Tibial artery (tissue), 4 donors: ENCODE measurements at regions of chr1 and their contacts with region 1.

Region 1: GRCh38 chr1:68103884-68104554 is 53.6 kb upstream of the DIRAS3 start:
- DNase-seq: no peak
- H3K4me3 ChIP-seq: no peak overlapping the region
- H3K27ac ChIP-seq: no peak overlapping the region
- H3K4me1 ChIP-seq: no peaks in the 10 kb centered on the region
- H3K27me3 ChIP-seq: no peaks in the 10 kb centered on the region
- CTCF ChIP-seq: no peak

Region 2: GRCh38 chr1:67853704-67854103 is 250.3 kb before region 1 on chr1:
- intact Hi-C with region 1: loop called (anchors 5 kb)
- DNase-seq: no peak
- H3K4me3 ChIP-seq: no peak overlapping the region
- H3K27ac ChIP-seq: no peak overlapping the region
- H3K4me1 ChIP-seq: peaks cover 0 to 11% (median 9%) of the 10 kb centered on the region in 4 donors
- H3K27me3 ChIP-seq: no peaks in the 10 kb centered on the region
- CTCF ChIP-seq: peak; percentile 47 to 52

Region 3: DNA sequence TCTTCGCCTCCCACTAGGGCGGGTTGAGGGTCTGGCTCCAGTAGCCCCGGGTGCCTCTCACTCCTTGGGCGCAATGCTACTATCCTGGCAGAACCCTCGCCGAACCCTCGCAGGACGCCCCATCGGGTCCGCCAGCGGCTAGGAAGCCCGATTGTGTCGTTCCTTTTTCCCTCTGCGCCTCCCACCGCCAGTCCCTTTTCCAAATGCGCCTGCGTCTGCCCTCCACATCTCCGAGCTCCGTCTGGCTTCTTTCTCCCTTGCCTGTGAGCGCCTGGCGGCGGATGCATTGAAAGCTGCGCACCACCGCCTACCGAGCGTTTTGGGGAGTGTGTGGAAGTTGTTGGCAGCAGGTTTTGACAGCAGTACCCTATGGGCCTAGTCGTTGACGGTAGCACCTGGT is 52.5 kb before region 1 on chr1:
- intact Hi-C with region 1: no loop called
- DNase-seq: peak; percentile 25 to 77
- H3K4me3 ChIP-seq: peak overlapping the region; percentile 44 to 51
- H3K27ac ChIP-seq: peak overlapping the region in 1 of 2 donors; percentile 28
- H3K4me1 ChIP-seq: no peaks in the 10 kb centered on the region
- H3K27me3 ChIP-seq: no peaks in the 10 kb centered on the region
- CTCF ChIP-seq: peak; percentile 43 to 56